Endothelial cell of umbilical vein (primary cell): ENCODE measurements at regions of chr4 and their contacts with region 1.

Region 1: DNA sequence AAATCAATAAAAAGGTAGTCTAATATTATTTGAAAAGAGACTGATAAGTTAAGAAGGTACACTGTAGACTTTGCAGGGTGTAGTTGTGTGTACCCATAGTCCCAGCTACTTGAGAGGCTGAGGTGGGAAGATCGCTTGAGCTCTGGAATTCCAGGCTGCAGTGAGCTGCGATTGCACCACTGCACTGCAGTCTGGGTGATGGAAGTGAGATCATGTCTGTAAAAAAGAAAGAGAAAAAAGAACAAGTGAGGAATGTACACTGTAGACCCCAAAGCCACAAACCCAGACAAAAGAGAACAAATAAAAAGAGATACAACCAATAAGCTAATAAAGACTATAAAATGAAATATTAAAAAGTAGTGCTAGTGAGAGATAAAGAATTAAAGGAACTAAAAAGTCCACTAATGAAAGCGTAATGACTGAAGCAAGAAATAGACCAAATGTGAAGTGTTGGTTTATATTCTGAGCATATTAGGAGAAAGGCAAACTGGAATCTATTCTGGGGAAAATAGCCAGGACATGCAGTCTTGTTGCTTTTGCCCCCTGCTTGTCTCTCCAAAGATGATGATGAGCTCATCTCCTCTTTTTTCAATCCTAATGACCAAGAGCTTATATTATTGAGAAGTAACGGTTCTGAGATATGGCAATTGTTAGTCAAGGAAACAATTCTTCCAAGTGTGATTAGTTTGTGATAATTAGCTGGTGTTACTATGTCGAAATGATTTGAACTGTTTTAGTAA is 19.1 kb downstream of the GSX2 start:
- DNase-seq: no peak
- H3K4me3 ChIP-seq: no peak overlapping the region
- H3K27ac ChIP-seq: no peak overlapping the region
- H3K4me1 ChIP-seq: no peaks in the 10 kb centered on the region
- H3K27me3 ChIP-seq: no peaks in the 10 kb centered on the region
- CTCF ChIP-seq: no peak
- POLR2A ChIP-seq: no peak

Region 2: DNA sequence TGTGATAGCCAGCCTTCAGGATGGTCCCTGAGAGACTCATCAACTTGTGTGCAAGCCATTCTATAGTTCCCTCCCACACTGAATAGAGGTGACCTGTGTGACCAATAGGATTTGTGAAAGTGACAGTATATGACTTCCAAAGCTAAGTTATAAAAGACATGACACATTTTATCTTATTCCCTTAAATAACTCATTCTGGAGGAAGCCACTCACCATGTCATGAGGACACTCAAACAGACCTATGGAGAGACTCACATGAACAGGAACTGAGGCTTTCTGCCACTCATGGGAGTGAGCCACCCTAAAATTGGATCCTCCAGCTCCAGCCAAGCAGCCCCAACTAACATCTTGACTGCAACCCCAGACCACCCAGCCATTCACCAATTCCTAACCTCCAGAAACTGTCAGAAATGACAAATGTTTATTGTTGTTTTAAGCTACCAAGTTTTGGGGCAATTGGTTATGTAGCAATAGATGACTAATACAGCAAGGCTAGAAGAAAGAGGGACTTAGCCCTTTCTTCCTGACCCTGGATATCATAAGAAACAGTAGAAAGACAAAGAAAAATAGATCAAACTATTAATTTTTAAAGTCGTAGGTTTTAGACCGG is 45.6 kb before region 1 on chr4:
- CTCF ChIA-PET with region 1: no interaction called
- POLR2A ChIA-PET with region 1: no interaction called
- dilution Hi-C with region 1: no loop called
- intact Hi-C with region 1: no loop called
- DNase-seq: no peak
- H3K4me3 ChIP-seq: no peak overlapping the region
- H3K27ac ChIP-seq: no peak overlapping the region
- H3K4me1 ChIP-seq: peaks cover 33% of the 10 kb centered on the region
- H3K27me3 ChIP-seq: no peaks in the 10 kb centered on the region
- CTCF ChIP-seq: no peak
- POLR2A ChIP-seq: no peak

Region 3: GRCh38 chr4:54185044-54185779 is 66.2 kb after region 1 on chr4:
- CTCF ChIA-PET with region 1: interaction called, 4 read pairs
- POLR2A ChIA-PET with region 1: no interaction called
- dilution Hi-C with region 1: no loop called
- intact Hi-C with region 1: loop called (anchors 2 kb)
- DNase-seq: no peak
- H3K4me3 ChIP-seq: no peak overlapping the region
- H3K27ac ChIP-seq: no peak overlapping the region
- H3K4me1 ChIP-seq: no peaks in the 10 kb centered on the region
- H3K27me3 ChIP-seq: no peaks in the 10 kb centered on the region
- CTCF ChIP-seq: no peak
- POLR2A ChIP-seq: no peak